ENCODE measurements at regions of chr14 and their contacts with region 1.

Region 1: GRCh38 chr14:50860478-50861086 is 11.3 kb upstream of the ABHD12B start:
- DNase-seq: peak; percentile 84
- H3K4me3 Mint-ChIP-seq: peak overlapping the region; percentile 67
- H3K27ac Mint-ChIP-seq: no peak overlapping the region
- H3K4me1 Mint-ChIP-seq: no peaks in the 10 kb centered on the region
- H3K27me3 Mint-ChIP-seq: no peaks in the 10 kb centered on the region
- CTCF ChIP-seq: peak; percentile 55

Region 2: GRCh38 chr14:50599700-50600444 is 260.7 kb before region 1 on chr14:
- CTCF ChIA-PET with region 1: interaction called, 4 read pairs
- intact Hi-C with region 1: loop called (anchors 5 kb)
- DNase-seq: no peak
- H3K4me3 Mint-ChIP-seq: no peak overlapping the region
- H3K27ac Mint-ChIP-seq: no peak overlapping the region
- H3K4me1 Mint-ChIP-seq: no peaks in the 10 kb centered on the region
- H3K27me3 Mint-ChIP-seq: no peaks in the 10 kb centered on the region
- CTCF ChIP-seq: no peak

Region 3: DNA sequence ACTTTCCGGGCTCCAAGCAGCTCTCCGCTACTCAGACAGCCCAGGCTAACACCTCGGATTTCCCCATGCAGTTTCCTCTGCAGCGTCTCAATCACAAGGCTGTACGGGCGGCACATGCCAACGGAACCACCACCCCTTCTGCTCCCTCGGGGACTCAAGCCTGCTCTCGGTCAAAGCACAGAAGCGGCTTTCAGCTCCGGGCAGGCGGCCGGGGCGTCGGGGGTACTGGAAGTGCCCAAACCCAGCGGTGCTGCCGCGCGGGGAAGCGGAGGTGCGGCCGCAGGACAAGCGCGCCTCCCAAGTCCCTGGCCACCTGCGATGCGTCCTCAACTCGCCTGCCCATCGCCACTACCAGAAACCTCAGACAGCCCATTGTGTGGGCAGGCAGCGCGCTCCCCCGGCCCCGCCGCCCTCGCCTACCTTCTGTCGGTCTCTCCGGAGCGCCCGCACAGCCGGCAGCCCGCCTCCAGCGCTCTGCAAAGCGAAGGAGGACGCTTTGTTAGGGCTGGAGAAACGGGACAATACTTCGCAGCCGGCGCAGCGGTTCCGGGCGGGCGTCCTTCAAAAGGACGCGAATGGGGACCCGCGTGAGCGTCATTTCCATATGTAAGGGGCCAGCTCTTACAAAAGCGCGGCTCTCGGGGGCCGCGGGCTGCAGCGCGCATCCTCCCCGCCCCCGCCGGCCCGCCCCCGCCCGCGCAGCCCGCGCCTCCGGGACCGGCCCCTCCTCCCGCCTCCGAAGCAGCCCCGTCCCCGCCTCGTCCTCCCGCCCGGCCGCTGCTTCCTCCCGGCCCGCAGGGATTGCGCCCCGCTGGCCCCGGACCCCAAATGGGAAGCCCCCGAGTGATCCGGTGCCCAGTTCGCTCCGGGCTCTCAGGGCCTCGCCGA is 30.3 kb before region 1 on chr14:
- CTCF ChIA-PET with region 1: interaction called, 10 read pairs
- intact Hi-C with region 1: no loop called
- DNase-seq: peak; percentile 34
- H3K4me3 Mint-ChIP-seq: peak overlapping the region; percentile 93
- H3K27ac Mint-ChIP-seq: no peak overlapping the region
- H3K4me1 Mint-ChIP-seq: peaks cover 9% of the 10 kb centered on the region
- H3K27me3 Mint-ChIP-seq: peaks cover 28% of the 10 kb centered on the region
- CTCF ChIP-seq: no peak

Region 4: GRCh38 chr14:50985124-50985858 is 124.7 kb after region 1 on chr14:
- CTCF ChIA-PET with region 1: no interaction called
- intact Hi-C with region 1: no loop called
- DNase-seq: no peak
- H3K4me3 Mint-ChIP-seq: no peak overlapping the region
- H3K27ac Mint-ChIP-seq: no peak overlapping the region
- H3K4me1 Mint-ChIP-seq: no peaks in the 10 kb centered on the region
- H3K27me3 Mint-ChIP-seq: no peaks in the 10 kb centered on the region
- CTCF ChIP-seq: no peak

Measured in Calu3 (cell line).